ENCODE measurements at regions of chr13 and their contacts with region 1.

Region 1: DNA sequence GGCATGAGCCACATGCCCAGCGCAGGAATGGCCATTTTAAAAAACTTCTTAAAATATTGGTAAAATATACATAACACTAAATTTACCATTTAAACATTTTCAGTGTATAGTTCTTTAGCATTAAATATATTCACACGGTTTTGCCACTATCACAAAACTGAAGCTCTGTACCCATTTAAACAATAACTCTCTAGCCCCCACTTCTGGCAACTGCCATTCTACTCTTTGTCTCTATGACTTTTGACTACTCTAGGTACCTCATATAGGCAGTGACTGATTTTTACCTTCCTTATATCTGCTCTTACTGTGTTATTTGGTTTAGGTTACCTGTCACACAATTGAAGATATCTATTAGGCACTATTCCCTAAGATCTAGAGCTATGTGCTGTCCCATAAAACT is 2.3 kb upstream of the KBTBD7 start:
- DNase-seq: no peak
- ATAC-seq: no peak
- H3K4me3 Mint-ChIP-seq: no peak overlapping the region
- H3K27ac Mint-ChIP-seq: no peak overlapping the region
- H3K4me1 Mint-ChIP-seq: peaks cover 32% of the 10 kb centered on the region
- H3K27me3 Mint-ChIP-seq: no peaks in the 10 kb centered on the region

Region 2: DNA sequence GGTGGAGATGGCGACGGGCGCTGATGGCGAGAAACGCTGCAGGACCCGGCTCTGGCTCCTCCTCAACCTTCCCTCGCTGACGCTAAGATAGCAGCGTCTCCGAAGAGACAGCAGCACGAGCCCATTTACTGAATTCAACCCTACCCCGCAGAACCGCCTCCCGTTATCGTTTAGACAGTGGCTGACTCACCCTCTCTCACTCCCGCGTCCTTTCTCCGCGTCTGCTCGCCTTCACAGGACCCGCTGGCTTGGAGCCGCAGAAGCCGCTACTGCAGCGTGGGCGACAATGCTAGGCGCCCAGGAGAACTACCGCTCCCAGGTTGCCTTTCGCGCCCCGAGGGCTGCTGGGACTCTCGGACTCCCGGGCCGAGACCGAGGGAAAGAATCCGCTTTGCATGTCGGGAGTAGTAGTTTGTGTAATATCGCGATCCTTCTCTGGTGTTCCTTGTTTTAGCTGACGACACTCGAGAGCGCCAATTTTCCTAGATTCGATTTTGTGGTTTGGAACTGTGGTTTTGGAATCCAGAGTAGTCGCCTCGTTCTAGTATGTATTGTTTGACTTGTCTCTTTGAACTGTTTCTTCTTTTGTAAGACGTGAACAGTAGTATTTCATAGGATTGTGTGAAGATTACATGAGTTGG is 64.0 kb before region 1 on chr13 and contains the start of gene KBTBD6:
- CTCF ChIA-PET with region 1: interaction called, 11 read pairs
- POLR2A ChIA-PET with region 1: no interaction called
- DNase-seq: peak; percentile 96
- ATAC-seq: peak; percentile 99
- H3K4me3 Mint-ChIP-seq: peak within 1 kb of the TSS; percentile 83
- H3K27ac Mint-ChIP-seq: peak within 1 kb of the TSS; percentile 86
- H3K4me1 Mint-ChIP-seq: peaks cover 45% of the 10 kb centered on the region
- H3K27me3 Mint-ChIP-seq: no peaks in the 10 kb centered on the region
- total RNA-seq, gene KBTBD6: 4.9 to 6.0 TPM

Region 3: DNA sequence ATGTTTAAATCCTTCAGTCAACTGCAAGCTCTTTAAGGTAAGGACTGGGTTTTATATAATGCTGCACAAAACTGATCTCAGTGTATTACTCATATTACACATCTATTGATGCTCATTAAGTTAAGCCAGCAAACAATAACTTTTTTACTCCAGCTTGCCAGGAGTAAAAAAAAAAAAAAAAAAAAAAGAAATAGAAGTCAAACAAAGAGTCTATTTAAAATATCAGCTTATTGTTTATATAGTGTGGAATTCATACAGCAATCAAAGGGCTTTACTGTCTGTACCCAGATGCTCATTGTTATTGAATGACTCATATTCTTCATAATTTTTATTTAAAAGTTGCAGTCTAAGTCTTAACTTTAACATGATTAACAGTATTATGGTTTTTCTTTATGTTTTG is 19.5 kb after region 1 on chr13:
- CTCF ChIA-PET with region 1: no interaction called
- POLR2A ChIA-PET with region 1: no interaction called
- DNase-seq: no peak
- ATAC-seq: no peak
- H3K4me3 Mint-ChIP-seq: no peak overlapping the region
- H3K27ac Mint-ChIP-seq: no peak overlapping the region
- H3K4me1 Mint-ChIP-seq: no peaks in the 10 kb centered on the region
- H3K27me3 Mint-ChIP-seq: no peaks in the 10 kb centered on the region